Activated CD4-positive, alpha-beta T cell treated with anti-CD3 and anti-CD28 coated beads for 36 hours (primary cell): ENCODE measurements at regions of chr16 and their contacts with region 1.

Region 1: DNA sequence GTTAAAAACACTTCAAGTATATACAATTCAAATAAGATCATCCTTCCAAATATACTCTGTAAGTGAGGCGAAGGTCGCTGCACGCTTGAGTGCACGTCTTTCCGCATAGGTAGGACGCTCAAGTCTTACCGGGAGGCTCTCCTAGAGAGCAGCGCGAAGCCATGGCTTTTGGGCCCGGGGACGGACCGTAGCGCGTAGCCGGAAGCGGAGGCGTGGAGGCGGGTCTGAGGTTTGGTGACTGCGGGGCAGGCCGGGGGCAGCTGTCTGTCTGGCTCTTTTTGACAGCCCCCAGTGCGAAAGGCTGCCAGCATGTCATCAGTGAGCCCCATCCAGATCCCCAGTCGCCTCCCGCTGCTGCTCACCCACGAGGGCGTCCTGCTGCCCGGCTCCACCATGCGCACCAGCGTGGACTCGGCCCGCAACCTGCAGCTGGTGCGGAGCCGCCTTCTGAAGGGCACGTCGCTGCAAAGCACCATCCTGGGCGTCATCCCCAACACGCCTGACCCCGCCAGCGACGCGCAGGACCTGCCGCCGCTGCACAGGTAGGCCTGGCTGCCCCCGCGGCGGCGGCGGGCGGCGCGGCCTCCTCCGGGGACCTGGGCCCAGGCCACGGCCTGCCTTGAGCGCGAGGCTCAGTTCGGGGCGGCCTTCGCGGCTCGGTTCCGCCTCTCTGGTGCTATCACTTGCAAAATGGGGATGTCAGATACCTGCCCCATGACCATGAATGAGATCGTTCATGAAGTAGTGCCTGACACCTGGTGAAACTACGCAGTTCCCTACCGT is at the start of gene LONP2:
- DNase-seq: peak; percentile 95
- ATAC-seq: peak; percentile 94
- H3K4me3 Mint-ChIP-seq: peak within 1 kb of the TSS; percentile 91
- H3K27ac Mint-ChIP-seq: peak within 1 kb of the TSS; percentile 88
- H3K4me1 Mint-ChIP-seq: peaks cover 36% of the 10 kb centered on the region
- H3K27me3 Mint-ChIP-seq: no peaks in the 10 kb centered on the region
- total RNA-seq, gene LONP2: 60.3 to 63.2 TPM

Region 2: GRCh38 chr16:48180868-48181480 is 63.3 kb before region 1 on chr16:
- CTCF ChIA-PET with region 1: no interaction called
- POLR2A ChIA-PET with region 1: no interaction called
- intact Hi-C with region 1: no loop called
- DNase-seq: no peak
- ATAC-seq: no peak
- H3K4me3 Mint-ChIP-seq: no peak overlapping the region
- H3K27ac Mint-ChIP-seq: no peak overlapping the region
- H3K4me1 Mint-ChIP-seq: no peaks in the 10 kb centered on the region
- H3K27me3 Mint-ChIP-seq: no peaks in the 10 kb centered on the region

Region 3: GRCh38 chr16:48330841-48331192 is 86.5 kb after region 1 on chr16:
- CTCF ChIA-PET with region 1: no interaction called
- POLR2A ChIA-PET with region 1: no interaction called
- intact Hi-C with region 1: no loop called
- DNase-seq: no peak
- ATAC-seq: no peak
- H3K4me3 Mint-ChIP-seq: no peak overlapping the region
- H3K27ac Mint-ChIP-seq: no peak overlapping the region
- H3K4me1 Mint-ChIP-seq: peaks cover 9% of the 10 kb centered on the region
- H3K27me3 Mint-ChIP-seq: no peaks in the 10 kb centered on the region

Region 4: DNA sequence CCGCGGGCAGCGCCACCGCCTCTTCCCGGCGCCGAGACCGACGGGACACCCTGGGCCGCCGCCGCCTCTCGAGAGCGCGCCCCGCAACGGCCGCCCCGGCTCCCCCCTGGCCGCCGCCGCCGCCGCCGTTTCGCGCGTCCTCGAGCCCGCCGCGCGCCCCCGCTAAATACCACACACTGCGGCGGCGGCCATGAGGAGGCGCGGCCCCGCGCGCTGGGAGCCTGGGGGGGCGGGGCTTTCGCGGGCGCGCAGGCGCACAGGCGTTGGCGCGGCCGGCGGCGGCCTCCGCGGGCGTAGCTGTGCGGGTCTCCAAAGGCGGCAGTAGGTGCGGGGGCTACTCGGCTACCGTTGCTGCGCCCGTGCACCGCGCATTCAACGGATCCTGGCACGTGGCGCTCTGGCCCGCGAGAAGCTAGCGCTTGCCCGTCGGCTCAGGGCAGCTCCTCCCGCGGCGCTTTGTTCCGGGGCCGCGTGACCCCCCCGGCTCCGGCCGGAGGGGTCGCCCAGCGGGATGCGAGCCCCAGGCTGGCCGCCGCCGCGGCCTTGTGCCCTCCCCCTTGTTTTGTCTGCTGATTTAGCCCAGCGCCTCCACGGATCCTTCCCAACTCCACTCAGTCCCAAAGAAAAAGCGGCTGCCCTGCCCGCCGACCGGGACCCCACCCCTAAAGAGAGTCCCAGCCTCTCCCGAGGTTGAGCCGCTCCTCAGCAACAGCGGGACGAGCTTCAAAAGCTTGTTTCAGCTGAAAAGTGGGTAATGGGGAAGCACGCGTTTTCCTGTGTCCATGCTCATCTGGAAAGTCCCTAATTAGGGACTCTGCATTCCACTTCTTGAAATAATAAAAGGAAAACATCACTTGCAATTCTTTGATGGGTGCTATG is 141.2 kb after region 1 on chr16 and contains the start of gene SIAH1:
- CTCF ChIA-PET with region 1: no interaction called
- POLR2A ChIA-PET with region 1: no interaction called
- intact Hi-C with region 1: loop called in 1 of 2 experiments (anchors 2 kb)
- DNase-seq: peak; percentile 91
- ATAC-seq: peak; percentile 82
- H3K4me3 Mint-ChIP-seq: peak within 1 kb of the TSS; percentile 85
- H3K27ac Mint-ChIP-seq: peak within 1 kb of the TSS; percentile 90
- H3K4me1 Mint-ChIP-seq: peaks cover 21% of the 10 kb centered on the region
- H3K27me3 Mint-ChIP-seq: no peaks in the 10 kb centered on the region
- total RNA-seq, gene SIAH1: 13.1 to 13.3 TPM